Naive thymus-derived CD4-positive, alpha-beta T cell (primary cell): ENCODE measurements at regions of chr14 and their contacts with region 1.

Region 1: GRCh38 chr14:69766984-69767368 is at the start of gene SRSF5:
- DNase-seq: peak; percentile 88 to 95 (median 93)
- ATAC-seq: peak; percentile 90
- H3K4me3 ChIP-seq: peak within 1 kb of the TSS; percentile 100
- H3K4me3 Mint-ChIP-seq: peak within 1 kb of the TSS; percentile 94 to 100 (median 99)
- H3K27ac ChIP-seq: peak within 1 kb of the TSS; percentile 100
- H3K27ac Mint-ChIP-seq: peak within 1 kb of the TSS; percentile 100
- H3K4me1 ChIP-seq: peaks cover 33 to 50% of the 10 kb centered on the region in 2 donors
- H3K4me1 Mint-ChIP-seq: peaks cover 49 to 86% (median 78%) of the 10 kb centered on the region in 7 donors
- H3K27me3 ChIP-seq: no peaks in the 10 kb centered on the region
- H3K27me3 Mint-ChIP-seq: peaks cover 0 to 4% (median 0%) of the 10 kb centered on the region in 5 donors
- total RNA-seq, gene SRSF5: 355 to 1,361 (median 1,191) TPM

Region 2: DNA sequence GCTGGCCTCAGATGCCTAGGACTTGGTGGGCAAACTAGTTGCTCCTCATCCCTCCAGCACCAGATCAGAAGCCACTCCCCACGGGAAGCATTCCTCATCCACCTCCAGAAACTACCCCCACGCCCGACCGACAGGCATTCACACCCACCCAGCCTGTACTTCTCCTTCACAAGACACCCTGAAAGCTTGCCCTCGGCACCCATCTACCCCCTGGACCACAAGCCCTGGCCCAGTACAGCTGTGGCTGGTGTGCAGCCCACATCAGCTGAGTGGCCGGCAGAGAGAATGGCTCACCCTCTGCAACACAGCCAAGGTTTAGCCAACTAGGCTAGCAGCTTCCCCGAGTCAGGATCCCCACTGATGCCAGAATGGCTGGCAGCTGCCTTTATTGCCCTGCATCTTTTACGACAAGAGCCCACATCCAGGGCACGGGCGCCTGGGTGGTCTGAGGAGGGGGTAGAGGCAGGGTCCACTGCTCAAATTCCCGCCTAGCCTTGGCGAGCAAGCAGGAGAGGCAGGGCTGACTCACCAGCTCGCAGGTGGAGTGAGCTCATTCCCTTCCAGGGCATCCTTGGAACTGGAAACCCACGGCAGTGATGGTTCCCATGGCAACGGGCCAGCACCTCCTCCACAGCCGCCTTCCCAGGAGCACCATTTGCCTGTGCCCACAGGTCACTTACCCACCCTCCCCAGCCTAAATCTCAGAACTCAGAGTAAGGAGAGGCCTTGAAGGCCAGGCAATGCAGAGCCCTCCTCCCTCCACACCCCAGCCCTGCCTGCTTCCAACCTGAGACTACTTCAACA is 805.0 kb before region 1 on chr14:
- CTCF ChIA-PET with region 1: no interaction called
- POLR2A ChIA-PET with region 1: no interaction called
- intact Hi-C with region 1: loop called in 1 of 2 experiments (anchors 10 kb)
- DNase-seq: no peak
- ATAC-seq: no peak
- H3K4me3 ChIP-seq: no peak overlapping the region
- H3K4me3 Mint-ChIP-seq: peak overlapping the region in 8 of 10 donors; percentile 29 to 96 (median 48)
- H3K27ac ChIP-seq: no peak overlapping the region
- H3K27ac Mint-ChIP-seq: peak overlapping the region in 8 of 9 donors; percentile 84 to 100 (median 92)
- H3K4me1 ChIP-seq: peaks cover 0 to 94% of the 10 kb centered on the region in 2 donors
- H3K4me1 Mint-ChIP-seq: peaks cover 23 to 100% (median 93%) of the 10 kb centered on the region in 7 donors
- H3K27me3 ChIP-seq: no peaks in the 10 kb centered on the region
- H3K27me3 Mint-ChIP-seq: no peaks in the 10 kb centered on the region

Region 3: GRCh38 chr14:69398053-69398817 is 368.7 kb before region 1 on chr14 and contains the starts of genes ERH and SLC39A9:
- CTCF ChIA-PET with region 1: no interaction called
- POLR2A ChIA-PET with region 1: interaction called, 10 read pairs
- intact Hi-C with region 1: loop called in 1 of 2 experiments (anchors 1 kb)
- DNase-seq: peak; percentile 78 to 97 (median 94)
- ATAC-seq: peak; percentile 93
- H3K4me3 ChIP-seq: peak within 1 kb of the TSS; percentile 81
- H3K4me3 Mint-ChIP-seq: peak within 1 kb of the TSS; percentile 89 to 100 (median 97)
- H3K27ac ChIP-seq: peak within 1 kb of the TSS; percentile 86
- H3K27ac Mint-ChIP-seq: peak within 1 kb of the TSS; percentile 98 to 100 (median 100)
- H3K4me1 ChIP-seq: peaks cover 31 to 52% of the 10 kb centered on the region in 2 donors
- H3K4me1 Mint-ChIP-seq: peaks cover 39 to 93% (median 73%) of the 10 kb centered on the region in 7 donors
- H3K27me3 ChIP-seq: no peaks in the 10 kb centered on the region
- H3K27me3 Mint-ChIP-seq: no peaks in the 10 kb centered on the region
- total RNA-seq, gene ERH: 85.1 to 330 (median 96.3) TPM
- total RNA-seq, gene SLC39A9: 27.2 to 50.3 (median 35.3) TPM

Region 4: DNA sequence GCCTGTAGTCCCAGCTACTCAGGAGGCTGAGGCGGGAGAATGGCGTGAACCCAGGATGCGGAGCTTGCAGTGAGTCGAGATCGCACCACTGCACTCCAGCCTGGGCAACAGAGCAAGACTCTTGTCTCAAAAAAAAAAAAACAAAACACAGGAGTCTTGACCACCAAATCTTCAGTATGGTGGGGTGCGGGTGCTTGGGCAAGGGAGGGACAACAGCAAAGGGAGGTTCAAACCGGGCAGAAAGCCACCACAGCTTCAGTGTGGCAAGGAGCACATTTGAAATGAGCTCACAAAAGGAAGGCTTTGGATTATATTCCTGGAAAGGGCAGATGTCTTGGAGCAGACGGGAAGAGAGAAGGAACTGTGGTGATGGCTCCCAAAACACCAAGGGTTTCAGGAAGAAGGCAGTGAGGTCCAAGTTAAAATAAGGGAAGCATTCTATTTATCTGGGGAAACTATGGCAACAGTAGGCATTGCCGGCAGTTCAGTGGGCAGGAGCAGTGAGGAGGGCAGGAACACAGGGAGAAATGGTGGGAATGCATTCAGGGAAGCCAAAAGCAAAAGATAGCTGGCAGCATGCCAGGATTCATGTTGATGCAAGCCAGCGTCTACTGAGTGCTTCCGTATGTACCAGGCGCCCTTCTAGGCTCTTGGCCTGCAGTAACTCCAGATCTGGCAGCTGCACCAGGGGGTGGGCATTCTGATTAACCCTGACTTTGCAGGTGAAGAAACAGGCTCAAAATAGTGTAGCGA is 51.1 kb before region 1 on chr14:
- CTCF ChIA-PET with region 1: no interaction called
- POLR2A ChIA-PET with region 1: no interaction called
- intact Hi-C with region 1: loop called in 1 of 2 experiments (anchors 1 kb)
- DNase-seq: no peak
- ATAC-seq: peak; percentile 29
- H3K4me3 ChIP-seq: no peak overlapping the region
- H3K4me3 Mint-ChIP-seq: peak overlapping the region in 2 of 10 donors; percentile 18 to 72
- H3K27ac ChIP-seq: no peak overlapping the region
- H3K27ac Mint-ChIP-seq: peak overlapping the region in 8 of 9 donors; percentile 9 to 88 (median 50)
- H3K4me1 ChIP-seq: peaks cover 12 to 14% of the 10 kb centered on the region in 2 donors
- H3K4me1 Mint-ChIP-seq: peaks cover 27 to 80% (median 37%) of the 10 kb centered on the region in 7 donors
- H3K27me3 ChIP-seq: no peaks in the 10 kb centered on the region
- H3K27me3 Mint-ChIP-seq: no peaks in the 10 kb centered on the region

Region 5: DNA sequence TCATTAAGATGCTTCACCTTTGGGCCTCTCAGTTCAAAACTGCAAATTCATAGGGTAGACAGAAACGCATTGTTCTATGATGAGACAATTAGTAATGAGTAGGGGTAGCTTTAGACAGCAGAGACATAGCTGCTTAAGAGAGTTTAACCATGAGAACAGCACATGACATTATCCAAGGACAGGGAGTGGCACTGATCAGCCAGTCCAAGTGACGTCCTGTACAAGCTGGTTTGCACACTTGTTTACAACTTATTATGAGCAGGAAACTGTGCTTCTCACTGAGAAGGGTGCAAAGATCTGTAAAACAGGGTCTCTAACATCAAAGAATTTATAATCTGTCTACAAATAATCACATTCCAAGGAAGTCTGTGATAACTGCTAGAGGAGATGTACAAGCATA is 11.2 kb before region 1 on chr14:
- CTCF ChIA-PET with region 1: interaction called, 4 read pairs
- POLR2A ChIA-PET with region 1: interaction called, 46 read pairs
- intact Hi-C with region 1: no loop called
- DNase-seq: no peak
- ATAC-seq: peak; percentile 41
- H3K4me3 ChIP-seq: no peak overlapping the region
- H3K4me3 Mint-ChIP-seq: peak overlapping the region in 5 of 10 donors; percentile 9 to 55 (median 32)
- H3K27ac ChIP-seq: no peak overlapping the region
- H3K27ac Mint-ChIP-seq: peak overlapping the region in 8 of 9 donors; percentile 11 to 90 (median 64)
- H3K4me1 ChIP-seq: peaks cover 0 to 11% of the 10 kb centered on the region in 2 donors
- H3K4me1 Mint-ChIP-seq: peaks cover 13 to 26% (median 21%) of the 10 kb centered on the region in 7 donors
- H3K27me3 ChIP-seq: no peaks in the 10 kb centered on the region
- H3K27me3 Mint-ChIP-seq: no peaks in the 10 kb centered on the region

Region 6: GRCh38 chr14:70809543-70810244 is 1042.7 kb after region 1 on chr14:
- CTCF ChIA-PET with region 1: no interaction called
- POLR2A ChIA-PET with region 1: no interaction called
- intact Hi-C with region 1: loop called in 1 of 2 experiments (anchors 5 kb)
- DNase-seq: peak; percentile 68 to 87 (median 78)
- ATAC-seq: peak; percentile 90
- H3K4me3 ChIP-seq: peak overlapping the region; percentile 73
- H3K4me3 Mint-ChIP-seq: peak overlapping the region in 1 of 10 donors; percentile 87
- H3K27ac ChIP-seq: peak overlapping the region; percentile 65
- H3K27ac Mint-ChIP-seq: peak overlapping the region in 6 of 9 donors; percentile 79 to 92 (median 88)
- H3K4me1 ChIP-seq: peaks cover 3 to 10% of the 10 kb centered on the region in 2 donors
- H3K4me1 Mint-ChIP-seq: peaks cover 9 to 17% (median 13%) of the 10 kb centered on the region in 7 donors
- H3K27me3 ChIP-seq: no peaks in the 10 kb centered on the region
- H3K27me3 Mint-ChIP-seq: peaks cover 0 to 9% (median 4%) of the 10 kb centered on the region in 5 donors